HepG2 (cell line): ENCODE measurements at regions of chr12 and their contacts with region 1.

Region 1: DNA sequence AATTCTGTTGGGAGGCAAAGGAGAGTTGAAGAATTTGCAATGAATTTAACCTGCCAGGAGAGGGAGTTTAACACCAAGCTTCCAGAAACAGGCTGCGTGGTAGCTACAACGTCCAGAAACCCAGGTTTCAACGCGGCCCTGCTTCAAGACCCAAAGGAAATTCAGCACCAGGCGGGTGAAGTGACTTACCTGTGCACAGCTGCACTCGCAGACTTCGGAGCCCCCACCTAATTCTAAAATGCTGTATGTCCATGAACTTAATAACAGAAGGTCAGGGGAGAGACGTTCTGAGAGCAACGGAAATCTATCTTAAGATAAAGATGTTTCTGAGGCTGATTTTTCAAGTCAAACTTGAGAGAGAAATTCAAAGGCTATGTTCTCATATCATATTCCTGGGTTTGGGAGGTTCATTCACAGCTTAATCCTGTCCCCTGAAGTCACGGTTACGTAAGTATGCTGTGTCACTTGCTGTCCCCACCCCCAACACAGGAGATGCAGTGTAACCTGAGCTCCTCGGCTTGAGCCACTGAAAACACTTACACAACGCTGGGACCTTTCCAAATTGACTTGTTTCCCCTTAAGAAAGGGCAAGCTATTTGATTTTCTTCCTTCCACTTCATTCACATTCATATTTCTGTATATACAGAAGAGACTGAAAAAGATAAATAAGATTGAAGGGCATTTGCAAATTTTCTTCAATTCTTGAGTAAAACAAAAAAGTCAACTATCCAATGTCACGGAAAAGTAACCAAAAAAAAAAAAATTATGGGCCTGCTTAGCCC is 22.7 kb downstream of the CLIP1 start:
- DNase-seq: peak; percentile 91
- ATAC-seq: peak; percentile 78
- H3K4me3 ChIP-seq: peak overlapping the region; percentile 24 to 62 (median 35); a peak in 5 of 6 replicates
- H3K27ac ChIP-seq: peak overlapping the region; percentile 94
- H3K4me1 ChIP-seq: peaks cover 58% of the 10 kb centered on the region
- H3K27me3 ChIP-seq: no peaks in the 10 kb centered on the region
- CTCF ChIP-seq: peak; percentile 82
- EP300 ChIP-seq: peak in 1 of 2 experiments; percentile 74; a peak in 2 of 4 replicates
- POLR2A ChIP-seq: peak; percentile 26; a peak in 1 of 4 replicates
- RAD21 ChIP-seq: peak; percentile 91

Region 2: DNA sequence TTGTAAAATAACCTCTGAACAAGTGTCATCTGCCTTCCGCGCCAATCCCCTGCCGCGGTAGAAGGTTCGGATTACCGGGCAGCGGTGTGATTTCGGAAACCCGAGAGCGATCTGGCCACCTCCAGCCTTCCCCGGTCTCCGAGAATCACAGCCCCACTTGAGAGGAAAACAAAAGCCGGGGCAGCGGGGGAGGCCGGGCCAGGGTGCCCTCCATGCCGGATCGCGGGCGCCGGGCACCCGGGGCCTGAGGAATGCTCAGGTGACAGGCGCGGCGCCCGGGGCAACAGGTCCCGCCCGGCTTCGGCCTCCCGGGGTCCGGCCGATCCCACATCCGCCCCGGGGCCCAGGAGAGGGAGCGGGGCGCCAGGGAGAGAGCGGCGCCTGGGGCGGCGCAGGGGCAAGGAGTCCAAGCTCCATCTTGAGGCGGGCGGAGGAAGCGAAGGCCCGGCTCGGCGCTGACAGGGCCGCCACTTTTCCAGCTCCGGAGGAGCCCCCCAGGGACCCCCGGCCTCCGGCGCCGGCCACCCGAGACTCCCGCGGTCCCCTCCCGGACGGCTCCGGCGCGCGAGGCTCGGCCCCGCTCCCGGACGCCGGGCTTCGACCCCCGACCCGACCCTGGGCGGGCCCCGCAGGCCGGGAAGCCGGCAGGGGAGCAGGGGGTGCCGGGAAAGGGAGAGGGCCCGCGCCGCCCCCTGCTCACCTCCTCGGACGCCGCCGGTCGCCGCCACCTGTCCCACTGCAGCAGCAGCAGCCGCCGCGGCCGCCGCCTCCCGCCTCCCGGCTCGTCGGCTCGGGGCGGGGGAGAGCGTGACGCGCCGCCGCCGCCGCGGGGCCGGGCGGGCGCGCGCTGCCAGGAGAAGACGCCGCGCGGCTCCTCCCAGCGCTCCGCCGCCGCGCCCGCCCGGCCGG is 22.3 kb after region 1 on chr12 and contains the start of gene CLIP1:
- CTCF ChIA-PET with region 1: interaction called, 4 read pairs
- POLR2A ChIA-PET with region 1: interaction called, 127 read pairs
- in situ Hi-C with region 1: no loop called
- intact Hi-C with region 1: loop called (anchors 1 kb)
- DNase-seq: peak; percentile 27
- ATAC-seq: peak; percentile 67
- H3K4me3 ChIP-seq: peak within 1 kb of the TSS; percentile 80 to 82 (median 81)
- H3K27ac ChIP-seq: peak within 1 kb of the TSS; percentile 76
- H3K4me1 ChIP-seq: peaks cover 59% of the 10 kb centered on the region
- H3K27me3 ChIP-seq: no peaks in the 10 kb centered on the region; a peak in 1 of 5 replicates
- CTCF ChIP-seq: peak; percentile 49
- EP300 ChIP-seq: no peak
- POLR2A ChIP-seq: peak in 1 of 2 experiments; percentile 23; a peak in 1 of 4 replicates
- RAD21 ChIP-seq: peak; percentile 53; the same call in 1 of the 2 replicates
- total RNA-seq, gene CLIP1: 28.9 and 30.2 TPM in 2 replicates

Region 3: DNA sequence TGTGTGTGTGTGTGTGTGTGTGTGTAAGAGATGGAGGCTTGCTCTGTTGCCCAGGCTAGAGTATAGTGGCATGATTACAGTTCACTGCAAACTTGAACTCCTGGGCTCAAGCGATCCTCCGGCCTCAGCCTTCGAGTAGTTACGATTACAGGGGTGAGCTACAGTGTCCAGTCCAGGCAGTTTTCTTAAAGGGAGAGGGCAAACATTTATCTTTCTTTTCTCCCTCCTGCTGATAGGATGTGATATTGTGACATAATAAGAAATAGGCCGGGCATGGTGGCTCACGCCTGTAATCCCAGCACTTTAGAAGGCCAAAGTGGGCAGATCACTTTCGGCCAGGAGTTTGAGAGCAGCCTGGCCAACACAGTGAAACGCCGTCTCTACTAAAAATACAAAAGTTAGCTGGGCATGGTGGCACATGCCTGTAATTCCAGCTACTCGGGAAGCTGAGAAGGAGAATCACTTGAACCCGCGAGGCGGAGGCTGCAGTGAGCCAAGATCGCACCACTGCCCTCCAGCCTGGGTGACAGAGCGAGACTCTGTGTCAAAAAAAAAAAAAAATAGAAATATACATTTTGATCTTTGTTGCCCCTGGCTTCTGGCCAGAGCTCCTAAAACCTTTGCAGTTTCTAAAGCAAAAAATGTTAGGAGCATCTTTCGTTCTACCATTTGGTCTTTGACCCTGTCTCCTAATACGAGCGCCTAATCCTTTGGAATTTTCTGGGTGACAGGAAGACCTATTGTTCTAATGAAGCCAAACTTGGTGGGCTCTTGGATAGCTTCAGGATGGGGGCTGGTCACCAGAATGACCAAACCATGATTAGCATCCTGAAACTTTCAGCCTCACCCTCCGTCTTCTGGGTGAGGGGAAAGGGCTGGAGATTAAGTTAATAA is 54.7 kb after region 1 on chr12:
- CTCF ChIA-PET with region 1: no interaction called
- POLR2A ChIA-PET with region 1: interaction called, 15 read pairs
- in situ Hi-C with region 1: no loop called
- intact Hi-C with region 1: no loop called
- DNase-seq: peak; percentile 86
- ATAC-seq: peak; percentile 54
- H3K4me3 ChIP-seq: peak overlapping the region; percentile 1 to 50 (median 33); a peak in 5 of 6 replicates
- H3K27ac ChIP-seq: peak overlapping the region; percentile 49
- H3K4me1 ChIP-seq: peaks cover 41% of the 10 kb centered on the region
- H3K27me3 ChIP-seq: no peaks in the 10 kb centered on the region
- CTCF ChIP-seq: no peak
- EP300 ChIP-seq: no peak
- POLR2A ChIP-seq: no peak; a peak in 1 of 4 replicates
- RAD21 ChIP-seq: no peak

Region 4: GRCh38 chr12:122491991-122492390 is 92.2 kb after region 1 on chr12:
- CTCF ChIA-PET with region 1: no interaction called
- POLR2A ChIA-PET with region 1: interaction called, 32 read pairs
- in situ Hi-C with region 1: no loop called
- intact Hi-C with region 1: no loop called
- DNase-seq: peak; percentile 89
- ATAC-seq: peak; percentile 91
- H3K4me3 ChIP-seq: no peak overlapping the region
- H3K27ac ChIP-seq: peak overlapping the region; percentile 69
- H3K4me1 ChIP-seq: peaks cover 88% of the 10 kb centered on the region
- H3K27me3 ChIP-seq: no peaks in the 10 kb centered on the region
- CTCF ChIP-seq: no peak
- EP300 ChIP-seq: peak; percentile 26 to 86; a peak in 3 of 4 replicates
- POLR2A ChIP-seq: no peak
- RAD21 ChIP-seq: no peak

Region 5: DNA sequence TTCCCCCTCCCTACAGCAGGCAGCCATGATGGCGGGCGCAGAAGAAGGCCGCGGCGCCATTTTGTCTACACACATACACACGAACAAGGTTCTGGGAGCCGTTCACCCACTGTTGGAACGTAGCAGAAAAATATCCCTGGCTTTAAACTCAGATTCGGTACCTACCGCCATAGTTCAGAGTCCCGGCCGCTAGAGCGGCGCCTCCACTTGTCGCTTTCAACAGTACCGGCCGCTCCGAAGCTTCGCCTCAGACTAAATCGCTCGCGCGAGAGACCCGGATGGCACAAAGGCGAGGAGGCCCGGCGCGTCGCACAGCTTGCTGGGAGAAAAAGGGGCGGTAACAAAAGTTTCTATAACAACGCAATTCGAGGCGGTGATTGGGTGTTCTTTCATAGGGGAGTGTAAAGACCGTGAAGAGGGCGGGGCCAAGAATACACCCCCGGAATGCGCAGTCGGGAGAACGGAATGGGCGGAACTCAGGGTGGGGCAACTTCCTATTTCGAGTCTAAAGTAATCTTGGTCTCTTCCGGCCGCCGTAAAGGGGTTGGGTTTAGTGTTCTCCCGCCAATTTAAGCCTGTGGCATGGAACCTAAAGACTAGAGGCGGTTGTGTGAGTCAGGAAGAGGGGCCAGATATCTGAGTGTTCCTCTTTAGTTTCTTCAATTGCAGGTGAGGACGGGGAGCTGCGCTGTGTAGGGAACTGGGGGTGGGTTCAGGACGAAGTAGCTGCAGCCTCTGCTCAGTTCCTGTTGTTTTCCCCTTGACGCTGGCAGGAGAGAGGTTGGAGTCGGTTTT is 127.1 kb after region 1 on chr12 and contains the starts of genes KNTC1 and RSRC2:
- CTCF ChIA-PET with region 1: no interaction called
- POLR2A ChIA-PET with region 1: interaction called, 19 read pairs
- in situ Hi-C with region 1: no loop called
- intact Hi-C with region 1: no loop called
- DNase-seq: peak; percentile 99
- ATAC-seq: peak; percentile 92
- H3K4me3 ChIP-seq: peak within 1 kb of the TSS; percentile 75 to 96 (median 89)
- H3K27ac ChIP-seq: peak within 1 kb of the TSS; percentile 100
- H3K4me1 ChIP-seq: peaks cover 31% of the 10 kb centered on the region
- H3K27me3 ChIP-seq: no peaks in the 10 kb centered on the region; a peak in 1 of 5 replicates
- CTCF ChIP-seq: no peak
- EP300 ChIP-seq: peak; percentile 8 to 34
- POLR2A ChIP-seq: peak; percentile 81 to 99
- RAD21 ChIP-seq: peak; percentile 16; the same call in 1 of the 2 replicates
- total RNA-seq, gene KNTC1: 49.2 and 57.6 TPM in 2 replicates
- total RNA-seq, gene RSRC2: 77.8 and 85.8 TPM in 2 replicates